Activated CD4-positive, alpha-beta memory T cell treated with anti-CD3 and anti-CD28 coated beads, Interleukin-2, amount 10 ng/mL, durations not matched to agents 7 days and 5 days (primary cell): ENCODE measurements at regions of chr2 and their contacts with region 1.

Region 1: GRCh38 chr2:230411570-230412370 is 4.2 kb upstream of the SP100 start:
- DNase-seq: peak; percentile 76
- H3K4me3 Mint-ChIP-seq: peak overlapping the region; percentile 98
- H3K27ac Mint-ChIP-seq: peak overlapping the region; percentile 100
- H3K4me1 Mint-ChIP-seq: peaks cover 61% of the 10 kb centered on the region
- H3K27me3 Mint-ChIP-seq: no peaks in the 10 kb centered on the region

Region 2: DNA sequence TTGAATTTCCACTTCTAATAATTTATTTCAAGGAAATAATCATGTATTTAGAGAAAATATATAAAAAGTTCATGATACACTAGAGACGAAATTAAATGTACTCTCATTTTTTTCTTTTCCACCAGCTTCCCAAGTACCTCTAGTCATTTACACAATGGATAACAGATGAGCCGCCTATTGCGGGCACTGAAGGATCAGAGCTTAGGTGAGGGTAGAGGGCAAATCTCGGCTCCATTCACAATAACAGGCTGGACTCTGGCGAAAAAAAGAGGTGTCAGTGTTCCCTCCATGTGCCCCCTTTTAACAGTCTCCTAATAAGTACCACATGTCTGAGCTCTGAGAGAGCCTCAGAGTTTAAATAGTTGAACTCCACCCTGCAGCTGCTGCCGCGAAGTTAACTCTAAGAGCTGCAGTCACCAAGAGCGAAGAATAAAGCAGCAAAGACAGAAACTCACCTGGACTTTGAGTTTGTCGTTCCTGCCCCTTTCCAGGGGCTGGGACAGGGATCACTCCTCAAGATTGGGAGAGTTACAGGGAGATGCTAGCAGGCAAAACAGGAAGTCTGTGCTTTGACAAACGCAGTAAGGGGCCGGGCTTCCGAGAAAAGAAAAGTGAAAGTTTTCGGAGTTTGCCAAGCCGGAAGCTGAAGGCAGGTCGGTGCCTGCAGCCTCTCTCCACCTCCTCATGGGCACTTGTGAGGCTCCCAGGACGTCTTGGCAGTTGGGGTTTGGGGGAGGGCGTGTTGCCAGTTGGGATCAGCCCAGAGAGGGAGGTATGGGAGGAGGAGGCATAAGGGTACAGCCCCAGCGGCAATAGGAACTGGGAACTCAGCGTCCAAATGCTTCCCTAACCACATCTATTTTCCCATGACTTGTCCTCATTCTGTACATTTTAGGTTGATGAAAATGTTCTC is 192.1 kb before region 1 on chr2 and contains the start of gene SP110:
- CTCF ChIA-PET with region 1: interaction called, 3 read pairs
- POLR2A ChIA-PET with region 1: interaction called, 44 read pairs
- DNase-seq: peak; percentile 88
- H3K4me3 Mint-ChIP-seq: peak within 1 kb of the TSS; percentile 94
- H3K27ac Mint-ChIP-seq: peak within 1 kb of the TSS; percentile 91
- H3K4me1 Mint-ChIP-seq: peaks cover 75% of the 10 kb centered on the region
- H3K27me3 Mint-ChIP-seq: no peaks in the 10 kb centered on the region
- total RNA-seq, gene SP110: 125 to 128 TPM

Region 3: GRCh38 chr2:230225486-230225885 is 186.3 kb before region 1 on chr2 and contains the start of gene SP140:
- CTCF ChIA-PET with region 1: interaction called, 5 read pairs
- POLR2A ChIA-PET with region 1: interaction called, 44 read pairs
- DNase-seq: peak; percentile 88
- H3K4me3 Mint-ChIP-seq: peak within 1 kb of the TSS; percentile 77
- H3K27ac Mint-ChIP-seq: peak within 1 kb of the TSS; percentile 94
- H3K4me1 Mint-ChIP-seq: peaks cover 64% of the 10 kb centered on the region
- H3K27me3 Mint-ChIP-seq: no peaks in the 10 kb centered on the region
- total RNA-seq, gene SP140: 132 to 137 TPM

Region 4: DNA sequence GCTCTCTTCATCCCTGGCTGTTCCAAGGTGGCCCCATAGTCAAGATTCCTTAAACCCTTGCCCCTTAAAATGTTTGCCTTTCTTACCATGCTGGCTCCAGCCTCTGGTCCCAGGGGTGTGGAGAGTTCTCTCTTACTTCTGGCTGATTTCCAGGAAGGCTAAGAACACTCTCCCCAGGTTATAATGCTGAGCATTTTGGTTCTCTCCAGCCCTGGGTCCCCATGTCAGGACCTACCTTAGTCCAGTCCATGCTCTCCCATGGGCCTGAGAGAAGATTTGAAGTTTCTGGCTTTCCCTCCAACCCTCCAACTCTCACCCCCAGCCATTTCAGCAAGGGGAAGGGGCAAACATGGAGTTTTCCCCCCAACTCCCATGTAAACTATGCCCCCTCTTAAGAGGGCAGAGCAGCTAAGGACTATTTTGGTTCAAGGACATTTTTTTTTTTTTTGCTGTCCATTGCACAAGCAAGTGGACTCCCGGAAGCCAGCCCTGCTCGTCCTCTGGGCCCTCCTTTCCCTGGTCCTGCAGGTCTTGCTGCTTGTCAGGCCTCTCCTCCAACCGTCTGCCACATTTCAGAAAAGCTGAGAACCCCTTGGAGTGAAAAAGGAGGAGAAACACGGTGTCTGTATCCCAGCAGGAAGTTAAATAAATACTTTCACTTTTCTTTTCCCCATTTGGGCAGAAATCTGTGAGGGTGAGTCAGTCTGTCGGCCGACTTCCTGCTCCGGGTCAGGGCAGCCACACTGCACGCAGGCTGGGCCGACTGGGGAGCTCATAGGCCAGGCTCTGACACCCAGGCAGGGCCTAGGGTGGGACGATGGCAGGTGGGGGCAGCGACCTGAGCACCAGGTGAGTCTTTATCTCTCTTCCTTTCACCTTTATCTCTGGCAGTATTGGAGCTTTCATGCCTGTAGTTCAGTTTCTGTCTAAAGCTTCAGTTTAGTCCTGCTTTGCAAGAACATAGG is 85.0 kb before region 1 on chr2 and contains the start of gene SP140L:
- CTCF ChIA-PET with region 1: no interaction called
- POLR2A ChIA-PET with region 1: interaction called, 52 read pairs
- DNase-seq: peak; percentile 86
- H3K4me3 Mint-ChIP-seq: peak within 1 kb of the TSS; percentile 89
- H3K27ac Mint-ChIP-seq: peak within 1 kb of the TSS; percentile 90
- H3K4me1 Mint-ChIP-seq: peaks cover 70% of the 10 kb centered on the region
- H3K27me3 Mint-ChIP-seq: no peaks in the 10 kb centered on the region
- total RNA-seq, gene SP140L: 85.2 to 88.0 TPM

Region 5: DNA sequence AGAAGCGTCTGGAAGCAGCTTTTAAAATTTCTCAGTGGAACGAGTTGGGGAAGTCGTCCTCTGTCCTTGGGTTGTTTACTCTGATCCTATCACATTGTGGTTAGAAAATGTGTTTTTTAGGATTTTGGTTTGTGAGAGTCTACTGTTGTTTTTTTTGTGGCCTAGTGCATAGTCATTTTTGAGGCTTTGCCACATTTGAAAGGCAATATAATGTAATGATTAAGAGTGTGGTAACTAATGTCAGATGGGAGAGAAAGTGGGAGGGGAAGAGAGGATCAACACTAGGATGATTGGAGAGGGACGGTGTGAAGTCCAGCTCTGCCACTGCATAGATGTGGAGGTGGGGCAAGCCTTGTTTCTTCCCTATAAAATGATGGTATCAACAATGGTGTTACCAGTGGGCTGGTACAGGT is 76.3 kb before region 1 on chr2:
- CTCF ChIA-PET with region 1: no interaction called
- POLR2A ChIA-PET with region 1: interaction called, 32 read pairs
- DNase-seq: no peak
- H3K4me3 Mint-ChIP-seq: peak overlapping the region; percentile 40
- H3K27ac Mint-ChIP-seq: peak overlapping the region; percentile 57
- H3K4me1 Mint-ChIP-seq: peaks cover 63% of the 10 kb centered on the region
- H3K27me3 Mint-ChIP-seq: no peaks in the 10 kb centered on the region

Region 6: GRCh38 chr2:230602562-230603230 is 190.9 kb after region 1 on chr2:
- CTCF ChIA-PET with region 1: no interaction called
- POLR2A ChIA-PET with region 1: interaction called, 15 read pairs
- DNase-seq: peak; percentile 71
- H3K4me3 Mint-ChIP-seq: peak overlapping the region; percentile 14
- H3K27ac Mint-ChIP-seq: peak overlapping the region; percentile 92
- H3K4me1 Mint-ChIP-seq: peaks cover 68% of the 10 kb centered on the region
- H3K27me3 Mint-ChIP-seq: no peaks in the 10 kb centered on the region